Dendritic cell treated with granulocyte-macrophage colony-stimulating factor and Interleukin-4, amounts not matched to agents 40 ng/mL and 50 ng/mL, for 4 days (primary cell): ENCODE measurements at regions of chr2 and their contacts with region 1.

Region 1: DNA sequence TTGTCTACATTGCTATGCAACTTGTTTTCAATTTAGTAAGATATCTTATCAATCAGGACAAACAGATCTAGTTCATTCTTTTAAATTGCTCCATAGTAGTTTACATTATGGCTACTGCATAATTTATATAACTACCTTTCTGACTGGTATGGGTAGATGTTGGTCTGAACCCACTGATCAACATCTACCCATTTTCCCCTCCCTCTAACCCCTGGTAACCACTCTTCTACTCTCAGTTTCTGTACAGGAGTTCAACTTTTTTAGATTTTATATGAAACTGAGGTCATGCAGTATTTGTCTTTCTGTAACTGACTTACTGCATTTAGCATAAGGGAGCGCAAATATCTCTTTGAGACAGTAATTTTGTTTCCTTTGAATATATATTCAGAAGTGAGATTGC is 73.2 kb downstream of the ITSN2 start:
- H3K4me3 Mint-ChIP-seq: no peak overlapping the region
- H3K27ac Mint-ChIP-seq: no peak overlapping the region
- H3K4me1 Mint-ChIP-seq: no peaks in the 10 kb centered on the region
- H3K27me3 Mint-ChIP-seq: no peaks in the 10 kb centered on the region

Region 2: GRCh38 chr2:24245986-24246776 is 41.0 kb before region 1 on chr2:
- intact Hi-C with region 1: loop called (anchors 5 kb)
- H3K4me3 Mint-ChIP-seq: no peak overlapping the region
- H3K27ac Mint-ChIP-seq: no peak overlapping the region
- H3K4me1 Mint-ChIP-seq: no peaks in the 10 kb centered on the region
- H3K27me3 Mint-ChIP-seq: no peaks in the 10 kb centered on the region